Left ventricle myocardium superior (tissue), 1 donor: ENCODE measurements at regions of chr6 and their contacts with region 1.

Region 1: GRCh38 chr6:138129190-138129589 is 22.0 kb upstream of the PERP start:
- DNase-seq: no peak
- ATAC-seq: no peak

Region 2: GRCh38 chr6:137892271-137892708 is 236.9 kb before region 1 on chr6:
- intact Hi-C with region 1: no loop called
- DNase-seq: no peak
- ATAC-seq: peak; percentile 71

Region 3: DNA sequence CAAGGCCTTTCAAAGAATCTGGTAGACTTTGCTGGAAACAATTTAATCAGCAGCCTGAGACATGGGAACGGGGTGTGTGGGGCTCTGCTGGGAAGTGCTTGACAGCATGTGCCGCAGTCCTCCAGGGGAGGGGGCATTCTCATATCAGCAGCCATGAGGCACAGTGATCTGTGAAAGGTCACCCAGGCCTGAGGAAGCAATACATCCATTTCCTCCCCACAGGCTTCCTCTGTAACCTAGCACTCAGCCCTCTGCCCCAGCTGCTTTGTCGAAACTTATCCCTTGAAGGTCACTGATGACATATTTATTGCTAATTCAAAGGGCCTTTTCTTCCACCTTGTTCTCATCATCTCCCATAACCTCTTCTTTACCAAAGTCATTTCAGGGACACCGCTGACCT is 158.8 kb before region 1 on chr6:
- intact Hi-C with region 1: no loop called
- DNase-seq: no peak
- ATAC-seq: no peak

Region 4: GRCh38 chr6:138264372-138264880 is 135.2 kb after region 1 on chr6:
- intact Hi-C with region 1: loop called (anchors 10 kb)
- DNase-seq: no peak
- ATAC-seq: no peak